HEK293 (cell line): ENCODE measurements at regions of chr12 and their contacts with region 1.

Region 1: DNA sequence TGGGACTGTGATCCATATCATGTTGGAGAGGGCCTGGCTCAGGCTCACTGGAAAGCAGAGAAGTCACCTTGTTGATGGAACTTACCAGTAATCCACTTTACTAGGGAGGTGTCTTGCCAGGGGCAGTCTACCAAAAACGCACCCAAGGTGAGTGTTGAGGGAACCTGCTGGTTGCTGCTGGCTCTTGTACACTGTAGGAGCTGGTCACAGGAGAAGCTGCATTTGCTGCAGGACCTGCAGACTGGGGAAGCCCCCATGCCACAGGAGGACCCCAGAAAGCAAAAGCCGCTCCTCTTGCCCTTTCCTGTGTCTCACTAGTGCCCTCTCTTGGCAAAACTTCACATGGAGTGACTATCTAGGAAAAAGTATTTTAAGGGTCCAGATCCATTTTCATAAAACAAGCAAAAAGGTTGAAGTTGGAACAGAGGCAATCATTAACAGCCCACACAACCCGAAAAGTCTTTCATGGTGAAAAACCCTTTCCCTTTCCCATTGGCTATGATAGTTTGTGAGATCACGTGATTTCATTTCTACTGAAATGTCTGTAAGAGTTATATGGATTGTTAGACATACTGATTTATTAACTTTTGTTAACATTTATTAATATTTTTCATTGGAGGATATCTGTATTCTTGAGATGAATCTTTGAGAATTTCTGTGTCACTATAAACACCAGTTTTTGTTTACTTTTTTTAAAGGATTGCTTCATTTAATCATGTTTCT is 59.2 kb downstream of the RASSF8 start:
- H3K4me3 ChIP-seq: no peak overlapping the region
- H3K27ac ChIP-seq: no peak overlapping the region
- H3K4me1 ChIP-seq: peaks cover 8% of the 10 kb centered on the region
- CTCF ChIP-seq: peak; percentile 47

Region 2: GRCh38 chr12:25769076-25769945 is 248.3 kb before region 1 on chr12:
- CTCF ChIA-PET with region 1: no interaction called
- POLR2A ChIA-PET with region 1: no interaction called
- H3K4me3 ChIP-seq: no peak overlapping the region
- H3K27ac ChIP-seq: no peak overlapping the region
- H3K4me1 ChIP-seq: peaks cover 6% of the 10 kb centered on the region
- CTCF ChIP-seq: no peak

Region 3: DNA sequence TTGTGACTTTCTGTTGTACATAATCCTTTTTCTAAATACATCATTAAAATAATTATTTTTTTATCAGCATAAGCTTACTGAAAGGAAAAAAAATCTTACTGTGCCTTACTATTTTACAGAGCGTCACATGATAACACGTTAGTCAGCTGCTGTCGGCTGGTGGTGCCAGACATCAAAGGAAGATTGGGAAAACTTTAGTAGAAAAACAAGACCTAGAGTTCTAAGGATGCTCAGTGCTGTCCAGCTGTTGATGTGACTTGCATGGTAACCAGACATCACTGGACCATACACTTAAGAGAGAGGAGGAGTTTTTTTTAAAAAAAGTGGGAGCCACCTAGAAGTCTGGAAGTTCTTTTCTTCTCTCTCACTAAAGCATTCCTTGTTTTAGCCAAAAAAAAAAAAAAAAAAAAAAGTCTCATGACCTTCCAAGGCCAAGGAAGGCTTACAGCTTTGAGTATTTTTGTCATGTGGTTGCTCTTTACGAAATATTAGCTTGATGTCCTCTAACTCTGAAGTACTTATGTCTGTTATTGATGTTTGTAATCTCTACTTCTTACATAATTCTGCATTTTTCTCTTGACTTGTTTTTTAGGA is 54.6 kb before region 1 on chr12:
- CTCF ChIA-PET with region 1: interaction called, 13 read pairs
- POLR2A ChIA-PET with region 1: interaction called, 4 read pairs
- H3K4me3 ChIP-seq: no peak overlapping the region
- H3K27ac ChIP-seq: no peak overlapping the region
- H3K4me1 ChIP-seq: peaks cover 11% of the 10 kb centered on the region
- CTCF ChIP-seq: no peak

Region 4: GRCh38 chr12:26028953-26029735 is 11.5 kb after region 1 on chr12:
- CTCF ChIA-PET with region 1: interaction called, 20 read pairs
- POLR2A ChIA-PET with region 1: no interaction called
- H3K4me3 ChIP-seq: no peak overlapping the region
- H3K27ac ChIP-seq: no peak overlapping the region
- H3K4me1 ChIP-seq: peaks cover 25% of the 10 kb centered on the region
- CTCF ChIP-seq: no peak; the same call in 1 of the 2 replicates